Activated CD8-positive, alpha-beta T cell treated with anti-CD3 and anti-CD28 coated beads, Interleukin-2, amount 10 ng/mL, durations not matched to agents 7 days and 5 days (primary cell): ENCODE measurements at regions of chr14 and their contacts with region 1.

Region 1: GRCh38 chr14:30980980-30981379 is 44.5 kb upstream of the AP4S1 start:
- DNase-seq: no peak
- ATAC-seq: no peak
- H3K4me3 Mint-ChIP-seq: no peak overlapping the region
- H3K27ac Mint-ChIP-seq: no peak overlapping the region
- H3K4me1 Mint-ChIP-seq: no peaks in the 10 kb centered on the region
- H3K27me3 Mint-ChIP-seq: no peaks in the 10 kb centered on the region

Region 2: DNA sequence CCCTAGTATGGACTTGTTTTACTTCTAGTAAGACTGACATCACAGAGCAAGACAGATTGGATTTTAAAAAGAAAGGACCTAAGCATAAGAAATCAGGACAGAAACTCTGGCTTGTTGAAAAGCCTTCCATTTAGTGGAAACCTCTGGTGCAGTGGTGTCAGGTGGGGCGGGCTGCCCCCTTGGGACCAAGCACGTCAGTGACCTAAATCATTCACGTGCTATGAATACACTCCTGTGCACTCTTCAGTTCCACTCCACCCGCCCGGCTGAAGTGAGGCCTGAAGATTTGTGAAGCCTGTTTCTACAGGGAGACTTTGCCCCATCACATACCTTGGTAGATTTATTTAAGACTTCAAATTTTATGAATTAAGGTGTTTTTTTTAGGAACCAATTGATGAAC is 103.4 kb after region 1 on chr14:
- CTCF ChIA-PET with region 1: interaction called, 24 read pairs
- POLR2A ChIA-PET with region 1: no interaction called
- DNase-seq: no peak
- ATAC-seq: no peak
- H3K4me3 Mint-ChIP-seq: no peak overlapping the region
- H3K27ac Mint-ChIP-seq: no peak overlapping the region
- H3K4me1 Mint-ChIP-seq: no peaks in the 10 kb centered on the region
- H3K27me3 Mint-ChIP-seq: no peaks in the 10 kb centered on the region